Naive thymus-derived CD4-positive, alpha-beta T cell (primary cell): ENCODE measurements at regions of chr22 and their contacts with region 1.

Region 1: DNA sequence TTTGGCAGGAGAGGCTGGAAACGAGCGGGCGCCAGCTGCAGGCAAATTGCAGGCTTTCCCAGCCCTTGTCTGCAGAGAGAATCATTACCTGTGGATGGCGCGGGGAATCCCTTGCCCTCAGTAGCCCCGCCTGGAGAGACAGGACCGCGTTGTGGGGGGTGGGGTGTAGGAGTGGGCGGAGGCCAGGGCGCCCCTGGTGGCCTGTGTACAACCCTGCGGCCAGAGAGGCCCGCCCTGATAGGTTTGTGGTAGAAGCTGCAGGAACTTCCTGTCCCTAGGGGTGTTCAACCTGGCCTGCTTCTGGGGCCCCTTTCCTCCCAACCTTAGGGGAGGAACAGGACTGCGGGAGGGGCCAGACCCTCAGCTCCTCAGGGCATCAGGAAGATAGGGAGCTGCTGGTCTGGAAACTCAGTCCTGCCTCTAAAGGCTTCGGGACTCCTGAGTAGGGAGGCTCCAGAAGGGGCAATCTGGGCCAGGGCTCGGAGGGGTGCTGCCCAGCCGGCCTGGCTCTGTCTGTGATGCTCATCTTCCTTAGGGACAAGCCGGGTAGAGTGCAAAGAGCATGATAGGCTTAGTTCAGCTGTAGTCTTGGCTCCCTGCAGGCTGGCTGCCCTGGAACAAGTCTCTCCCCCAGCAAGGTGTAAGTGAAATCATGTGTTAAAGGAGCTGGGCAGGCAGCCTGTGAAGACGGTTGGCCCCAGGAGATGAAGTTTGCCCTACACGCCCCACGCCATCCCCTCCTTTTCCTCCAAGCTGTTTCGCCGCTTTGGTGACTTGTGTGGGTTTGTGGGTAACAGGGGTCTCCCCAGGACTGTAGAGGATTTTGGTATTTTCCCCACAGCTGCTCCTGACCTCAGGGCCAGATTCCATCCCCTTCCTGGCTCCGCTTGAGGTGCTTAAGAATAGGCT is 24.1 kb upstream of the SUSD2 start:
- DNase-seq: peak; percentile 75 to 87 (median 84)
- ATAC-seq: peak; percentile 91
- H3K4me3 ChIP-seq: peak overlapping the region; percentile 97
- H3K4me3 Mint-ChIP-seq: peak overlapping the region; percentile 73 to 97 (median 94)
- H3K27ac ChIP-seq: peak overlapping the region; percentile 79
- H3K27ac Mint-ChIP-seq: peak overlapping the region; percentile 83 to 93 (median 89)
- H3K4me1 ChIP-seq: peaks cover 55 to 60% of the 10 kb centered on the region in 2 donors
- H3K4me1 Mint-ChIP-seq: peaks cover 60 to 89% (median 75%) of the 10 kb centered on the region in 7 donors
- H3K27me3 ChIP-seq: no peaks in the 10 kb centered on the region
- H3K27me3 Mint-ChIP-seq: no peaks in the 10 kb centered on the region

Region 2: GRCh38 chr22:23893943-23894709 is 263.0 kb before region 1 on chr22 and contains the start of gene MIF:
- CTCF ChIA-PET with region 1: no interaction called
- POLR2A ChIA-PET with region 1: interaction called, 4 read pairs
- intact Hi-C with region 1: loop called in 1 of 2 experiments (anchors 5 kb)
- DNase-seq: peak; percentile 88 to 100 (median 94)
- ATAC-seq: peak; percentile 96
- H3K4me3 ChIP-seq: peak within 1 kb of the TSS; percentile 88
- H3K4me3 Mint-ChIP-seq: peak within 1 kb of the TSS; percentile 88 to 97 (median 94)
- H3K27ac ChIP-seq: peak within 1 kb of the TSS; percentile 93
- H3K27ac Mint-ChIP-seq: peak within 1 kb of the TSS; percentile 92 to 100 (median 97)
- H3K4me1 ChIP-seq: peaks cover 16% of the 10 kb centered on the region in 2 donors
- H3K4me1 Mint-ChIP-seq: peaks cover 12 to 39% (median 30%) of the 10 kb centered on the region in 7 donors
- H3K27me3 ChIP-seq: no peaks in the 10 kb centered on the region
- H3K27me3 Mint-ChIP-seq: no peaks in the 10 kb centered on the region
- total RNA-seq, gene MIF: 179 to 1,010 (median 197) TPM

Region 3: GRCh38 chr22:24037851-24038765 is 119.1 kb before region 1 on chr22:
- CTCF ChIA-PET with region 1: no interaction called
- POLR2A ChIA-PET with region 1: interaction called, 4 read pairs
- intact Hi-C with region 1: loop called in 1 of 2 experiments (anchors 5 kb)
- DNase-seq: peak in 7 of 9 donors; percentile 44 to 80 (median 73)
- ATAC-seq: peak; percentile 89
- H3K4me3 ChIP-seq: no peak overlapping the region
- H3K4me3 Mint-ChIP-seq: peak overlapping the region in 9 of 10 donors; percentile 61 to 83 (median 80)
- H3K27ac ChIP-seq: peak overlapping the region; percentile 62
- H3K27ac Mint-ChIP-seq: peak overlapping the region; percentile 77 to 97 (median 92)
- H3K4me1 ChIP-seq: peaks cover 0 to 36% of the 10 kb centered on the region in 2 donors
- H3K4me1 Mint-ChIP-seq: peaks cover 25 to 86% (median 76%) of the 10 kb centered on the region in 7 donors
- H3K27me3 ChIP-seq: no peaks in the 10 kb centered on the region
- H3K27me3 Mint-ChIP-seq: no peaks in the 10 kb centered on the region

Region 4: DNA sequence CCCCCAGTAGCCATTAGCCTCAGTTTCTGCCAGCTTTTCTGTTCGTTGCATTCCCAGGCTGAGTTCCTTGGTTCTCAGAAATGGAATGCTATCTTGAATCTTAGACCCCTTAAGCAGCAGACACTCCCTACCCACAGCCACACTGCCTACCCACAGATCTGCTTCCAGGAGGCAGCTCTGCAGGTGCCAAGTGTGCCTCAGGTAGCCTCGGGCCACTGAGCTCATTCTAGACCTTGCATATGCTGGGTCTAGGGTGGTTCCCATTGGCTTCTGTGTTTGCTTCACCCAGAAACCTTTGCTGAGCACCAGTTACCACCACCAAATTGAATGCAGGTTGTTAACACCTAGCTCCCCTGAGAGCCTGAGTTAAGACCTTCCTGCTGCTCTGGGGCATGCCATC is 34.0 kb before region 1 on chr22:
- CTCF ChIA-PET with region 1: interaction called, 13 read pairs
- POLR2A ChIA-PET with region 1: no interaction called
- intact Hi-C with region 1: no loop called
- DNase-seq: no peak
- ATAC-seq: no peak
- H3K4me3 ChIP-seq: no peak overlapping the region
- H3K4me3 Mint-ChIP-seq: no peak overlapping the region
- H3K27ac ChIP-seq: no peak overlapping the region
- H3K27ac Mint-ChIP-seq: peak overlapping the region in 1 of 9 donors; percentile 23
- H3K4me1 ChIP-seq: no peaks in the 10 kb centered on the region
- H3K4me1 Mint-ChIP-seq: peaks cover 0 to 4% (median 0%) of the 10 kb centered on the region in 7 donors
- H3K27me3 ChIP-seq: no peaks in the 10 kb centered on the region
- H3K27me3 Mint-ChIP-seq: no peaks in the 10 kb centered on the region

Region 5: DNA sequence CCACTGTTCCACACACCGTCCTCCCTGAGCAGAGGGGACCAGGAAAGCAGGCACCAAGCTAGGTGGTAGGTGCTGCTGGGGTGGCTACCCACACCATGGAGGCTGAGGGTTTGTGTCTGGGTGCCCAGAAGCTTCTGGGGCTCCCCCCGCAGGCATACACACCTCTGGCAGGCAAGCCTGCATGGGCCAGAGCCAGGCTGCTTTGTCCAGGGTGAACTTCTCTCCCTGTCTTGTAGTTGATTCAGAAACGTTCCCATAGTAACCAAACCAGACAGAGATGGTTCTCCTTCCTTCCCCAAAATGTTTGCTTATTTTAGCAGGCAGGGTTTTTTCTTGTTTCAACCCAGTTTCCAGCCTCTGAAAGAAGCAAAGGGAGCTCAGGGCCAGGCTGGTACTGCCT is 16.8 kb before region 1 on chr22:
- CTCF ChIA-PET with region 1: interaction called, 109 read pairs
- POLR2A ChIA-PET with region 1: interaction called, 296 read pairs
- intact Hi-C with region 1: loop called in 1 of 2 experiments (anchors 2 kb)
- DNase-seq: no peak
- ATAC-seq: peak; percentile 62
- H3K4me3 ChIP-seq: no peak overlapping the region
- H3K4me3 Mint-ChIP-seq: peak overlapping the region in 1 of 10 donors; percentile 40
- H3K27ac ChIP-seq: peak overlapping the region; percentile 3
- H3K27ac Mint-ChIP-seq: peak overlapping the region in 7 of 9 donors; percentile 14 to 82 (median 71)
- H3K4me1 ChIP-seq: peaks cover 26 to 48% of the 10 kb centered on the region in 2 donors
- H3K4me1 Mint-ChIP-seq: peaks cover 39 to 78% (median 70%) of the 10 kb centered on the region in 7 donors
- H3K27me3 ChIP-seq: no peaks in the 10 kb centered on the region
- H3K27me3 Mint-ChIP-seq: no peaks in the 10 kb centered on the region

Region 6: GRCh38 chr22:24175160-24175808 is 18.1 kb after region 1 on chr22:
- CTCF ChIA-PET with region 1: interaction called, 23 read pairs
- POLR2A ChIA-PET with region 1: interaction called, 17 read pairs
- intact Hi-C with region 1: loop called in 1 of 2 experiments (anchors 1 kb)
- DNase-seq: peak; percentile 35 to 69 (median 60)
- ATAC-seq: peak; percentile 73
- H3K4me3 ChIP-seq: no peak overlapping the region
- H3K4me3 Mint-ChIP-seq: no peak overlapping the region
- H3K27ac ChIP-seq: no peak overlapping the region
- H3K27ac Mint-ChIP-seq: peak overlapping the region in 3 of 9 donors; percentile 17 to 46 (median 34)
- H3K4me1 ChIP-seq: no peaks in the 10 kb centered on the region
- H3K4me1 Mint-ChIP-seq: no peaks in the 10 kb centered on the region
- H3K27me3 ChIP-seq: no peaks in the 10 kb centered on the region
- H3K27me3 Mint-ChIP-seq: no peaks in the 10 kb centered on the region